ENCODE measurements at regions of chr7 and their contacts with region 1.

Region 1: DNA sequence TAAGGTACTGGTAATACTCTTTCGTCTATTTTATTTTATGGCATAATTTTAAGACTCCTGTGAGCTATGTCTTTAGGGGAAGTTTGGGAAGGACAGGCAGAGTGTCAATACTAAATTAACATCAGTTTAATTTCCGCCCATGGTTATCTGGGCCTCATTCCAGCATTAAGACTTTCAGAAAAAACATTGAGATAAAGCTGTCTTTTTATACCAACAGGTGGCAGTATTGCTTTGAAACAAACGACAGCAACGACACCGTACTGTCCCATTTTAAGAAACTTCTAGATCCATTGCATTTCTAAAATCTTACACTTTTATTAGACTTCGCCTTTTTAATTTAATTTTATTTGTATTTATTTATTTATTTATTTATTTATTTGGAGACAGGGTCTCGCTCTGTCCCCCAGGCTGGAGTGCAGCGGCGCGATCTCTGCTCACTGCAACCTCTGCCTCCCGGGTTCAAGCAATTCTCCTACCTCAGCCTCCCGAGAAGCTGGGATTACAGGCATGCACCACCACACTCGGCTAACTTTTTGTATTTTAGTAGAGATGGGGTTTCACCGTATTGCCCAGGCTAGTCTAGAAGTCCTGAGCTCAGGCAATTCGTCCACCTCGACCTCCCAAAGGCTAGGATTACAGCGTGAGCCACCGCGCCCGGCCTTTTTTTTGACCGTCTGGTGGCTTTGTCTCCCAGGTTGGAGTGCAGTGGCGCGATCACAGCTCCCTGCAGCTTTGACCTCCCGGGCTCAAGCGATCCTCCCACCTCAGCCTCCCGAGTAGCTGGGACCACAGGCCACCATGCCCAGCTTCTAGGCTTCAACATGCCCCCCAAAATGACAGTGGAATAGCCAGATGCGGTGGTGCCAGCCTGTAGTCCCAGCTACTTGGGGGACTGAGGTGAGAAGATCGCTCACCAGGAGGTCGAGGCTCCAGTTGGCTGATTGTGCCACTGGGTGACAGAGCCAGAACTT is 78.7 kb upstream of the C1GALT1 start:
- DNase-seq: peak; percentile 31
- ATAC-seq: peak; percentile 80
- H3K4me3 Mint-ChIP-seq: no peak overlapping the region
- H3K27ac Mint-ChIP-seq: peak overlapping the region; percentile 20
- H3K4me1 Mint-ChIP-seq: peaks cover 20% of the 10 kb centered on the region
- H3K27me3 Mint-ChIP-seq: peaks cover 5% of the 10 kb centered on the region

Region 2: GRCh38 chr7:7114706-7115295 is 11.2 kb after region 1 on chr7:
- CTCF ChIA-PET with region 1: interaction called, 15 read pairs
- POLR2A ChIA-PET with region 1: no interaction called
- DNase-seq: no peak
- ATAC-seq: no peak
- H3K4me3 Mint-ChIP-seq: no peak overlapping the region
- H3K27ac Mint-ChIP-seq: no peak overlapping the region
- H3K4me1 Mint-ChIP-seq: no peaks in the 10 kb centered on the region
- H3K27me3 Mint-ChIP-seq: no peaks in the 10 kb centered on the region

Region 3: DNA sequence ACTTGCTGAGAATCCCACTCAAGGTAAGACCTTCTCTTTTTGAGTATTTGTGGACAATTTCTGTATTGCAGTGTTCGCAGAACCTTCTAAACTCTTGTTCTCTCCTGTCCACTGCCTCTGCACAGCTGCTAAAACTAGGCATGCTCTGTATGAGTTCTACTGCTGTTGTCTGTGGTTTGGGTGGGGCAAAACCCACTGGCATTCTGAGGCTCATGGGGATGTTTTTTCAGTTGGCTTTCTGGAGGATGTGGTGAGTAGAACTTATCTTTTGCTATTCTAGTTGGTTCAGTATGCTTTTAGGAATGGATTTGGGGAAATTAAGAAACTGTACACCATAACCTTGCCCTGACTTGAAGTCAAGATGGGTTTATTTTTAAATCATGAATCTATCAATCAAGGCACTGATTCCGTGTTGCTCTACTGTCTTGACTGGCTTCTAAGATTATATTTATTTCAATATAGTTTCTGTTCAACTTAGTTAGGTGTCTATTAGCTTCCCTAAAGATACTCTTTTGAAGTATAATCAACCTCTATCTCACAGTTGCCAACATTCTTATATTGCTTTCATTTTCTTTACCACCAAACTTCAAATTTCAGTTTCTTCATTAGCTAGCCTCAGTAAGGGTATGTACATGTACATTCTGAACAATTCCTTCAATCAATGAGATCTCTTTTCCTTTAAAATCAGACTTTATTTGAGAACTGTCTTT is 53.7 kb after region 1 on chr7:
- CTCF ChIA-PET with region 1: interaction called, 13 read pairs
- POLR2A ChIA-PET with region 1: interaction called, 3 read pairs
- DNase-seq: peak; percentile 84
- ATAC-seq: peak; percentile 95
- H3K4me3 Mint-ChIP-seq: peak overlapping the region; percentile 84
- H3K27ac Mint-ChIP-seq: peak overlapping the region; percentile 98
- H3K4me1 Mint-ChIP-seq: peaks cover 48% of the 10 kb centered on the region
- H3K27me3 Mint-ChIP-seq: no peaks in the 10 kb centered on the region

Region 4: DNA sequence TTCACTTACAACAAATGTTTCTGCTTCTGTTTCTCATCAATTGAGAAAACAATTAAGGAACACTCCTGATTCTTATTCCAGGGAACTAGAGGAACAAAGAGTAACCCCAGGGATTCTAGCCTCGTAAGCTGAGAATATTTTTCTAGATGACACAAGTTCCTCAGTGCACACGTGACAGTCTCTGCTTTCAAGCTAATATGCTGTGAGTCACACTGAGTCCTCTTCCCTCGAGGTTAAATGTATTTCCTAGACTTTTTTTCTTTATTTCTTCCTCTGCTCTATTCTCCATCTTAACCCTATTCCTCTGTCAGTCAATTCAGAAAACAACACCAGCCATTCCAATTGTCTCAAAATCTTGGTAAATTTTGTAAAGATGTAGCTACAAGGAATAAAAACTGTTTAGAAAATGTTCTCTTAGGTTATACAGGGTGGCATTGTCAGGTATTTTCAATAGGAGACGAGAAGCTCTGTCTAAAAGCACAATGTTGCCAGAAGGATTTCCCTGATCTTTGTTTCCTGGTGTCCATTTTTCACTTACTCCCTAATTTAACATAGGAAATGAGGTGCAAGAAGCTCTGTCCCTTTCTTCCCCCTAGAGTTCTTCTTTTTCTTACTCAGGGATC is 72.9 kb after region 1 on chr7:
- CTCF ChIA-PET with region 1: interaction called, 15 read pairs
- POLR2A ChIA-PET with region 1: interaction called, 29 read pairs
- DNase-seq: no peak
- ATAC-seq: no peak
- H3K4me3 Mint-ChIP-seq: no peak overlapping the region
- H3K27ac Mint-ChIP-seq: no peak overlapping the region
- H3K4me1 Mint-ChIP-seq: peaks cover 7% of the 10 kb centered on the region
- H3K27me3 Mint-ChIP-seq: no peaks in the 10 kb centered on the region

Region 5: DNA sequence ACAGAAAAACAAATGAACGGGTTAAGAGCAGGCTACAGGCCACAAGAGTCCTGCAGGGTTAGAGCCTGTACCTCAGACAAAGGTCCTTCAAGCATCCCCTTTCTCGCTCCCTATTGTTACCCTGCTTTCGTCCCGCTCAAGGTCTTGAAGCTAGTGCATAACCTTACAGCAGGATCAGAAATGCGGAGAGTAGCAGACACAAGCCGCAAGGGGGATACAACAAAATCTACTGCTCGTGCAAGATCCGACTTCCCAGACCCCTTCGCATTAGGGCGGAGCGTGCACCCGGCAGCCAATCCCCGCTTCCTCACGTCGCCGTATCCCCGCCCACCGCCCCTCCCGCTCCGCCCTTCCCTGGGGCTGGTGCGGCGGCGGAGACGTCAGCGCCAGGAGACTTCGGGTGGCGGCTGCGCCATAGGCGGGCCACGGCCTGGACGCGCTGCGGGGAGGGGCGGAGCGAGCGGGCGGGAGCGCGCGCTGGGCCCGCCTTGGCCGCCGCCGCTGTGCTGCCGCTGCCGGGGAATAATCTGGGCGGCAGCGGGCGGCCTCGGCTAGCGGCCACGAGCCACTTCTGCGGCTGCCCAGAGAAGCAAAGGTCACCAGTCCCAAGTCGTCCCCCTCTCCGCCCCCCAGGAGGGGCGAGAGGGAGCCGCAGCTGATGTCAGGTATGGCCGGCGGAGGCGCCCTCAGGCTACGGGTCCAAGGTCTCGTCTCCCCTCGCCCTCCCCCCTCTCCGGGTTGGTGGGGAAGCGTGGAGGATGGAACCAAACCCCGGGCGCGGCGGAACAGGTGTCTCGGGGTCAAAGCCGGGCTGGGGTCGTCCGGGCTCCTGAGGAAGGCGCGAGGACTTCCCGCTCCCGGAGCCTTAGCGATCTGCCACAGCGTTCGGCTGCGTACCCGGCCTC is 78.8 kb after region 1 on chr7 and contains the start of gene C1GALT1:
- CTCF ChIA-PET with region 1: interaction called, 15 read pairs
- POLR2A ChIA-PET with region 1: interaction called, 29 read pairs
- DNase-seq: peak; percentile 98
- ATAC-seq: peak; percentile 88
- H3K4me3 Mint-ChIP-seq: peak within 1 kb of the TSS; percentile 87
- H3K27ac Mint-ChIP-seq: peak within 1 kb of the TSS; percentile 98
- H3K4me1 Mint-ChIP-seq: peaks cover 19% of the 10 kb centered on the region
- H3K27me3 Mint-ChIP-seq: no peaks in the 10 kb centered on the region
- total RNA-seq, gene C1GALT1: 47.4 to 50.7 TPM

Region 6: GRCh38 chr7:7257899-7258692 is 154.5 kb after region 1 on chr7:
- CTCF ChIA-PET with region 1: interaction called, 13 read pairs
- POLR2A ChIA-PET with region 1: no interaction called
- DNase-seq: peak; percentile 33
- ATAC-seq: peak; percentile 70
- H3K4me3 Mint-ChIP-seq: peak overlapping the region; percentile 59
- H3K27ac Mint-ChIP-seq: peak overlapping the region; percentile 81
- H3K4me1 Mint-ChIP-seq: peaks cover 46% of the 10 kb centered on the region
- H3K27me3 Mint-ChIP-seq: no peaks in the 10 kb centered on the region

Region 7: DNA sequence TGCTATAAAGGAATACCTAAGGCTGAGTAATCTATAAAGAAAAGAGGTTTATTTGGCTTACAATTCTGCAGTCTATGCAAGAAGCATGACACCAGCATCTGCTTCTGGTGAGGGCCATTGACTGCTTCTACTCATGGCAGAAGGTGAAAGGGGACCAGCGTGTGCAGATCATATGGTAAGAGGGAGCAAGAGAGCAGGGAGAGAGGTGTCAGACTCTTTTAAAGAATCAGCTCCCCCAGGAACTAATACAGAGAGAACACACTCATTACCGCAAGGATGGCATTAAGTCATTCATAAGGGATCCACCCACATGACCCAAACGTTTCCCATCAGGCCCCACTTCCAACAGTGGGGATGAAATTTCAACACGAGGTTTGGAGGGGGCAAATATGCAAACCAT is 435.5 kb after region 1 on chr7:
- CTCF ChIA-PET with region 1: interaction called, 50 read pairs
- POLR2A ChIA-PET with region 1: no interaction called
- DNase-seq: no peak
- ATAC-seq: no peak
- H3K4me3 Mint-ChIP-seq: no peak overlapping the region
- H3K27ac Mint-ChIP-seq: no peak overlapping the region
- H3K4me1 Mint-ChIP-seq: no peaks in the 10 kb centered on the region
- H3K27me3 Mint-ChIP-seq: peaks cover 6% of the 10 kb centered on the region